Naive thymus-derived CD4-positive, alpha-beta T cell (primary cell): ENCODE measurements at regions of chrX and their contacts with region 1.

Region 1: GRCh38 chrX:54639346-54640102 is 109.5 kb downstream of the GNL3L start:
- DNase-seq: peak; percentile 73 to 95 (median 89)
- ATAC-seq: peak; percentile 93
- H3K4me3 ChIP-seq: peak overlapping the region; percentile 64
- H3K4me3 Mint-ChIP-seq: peak overlapping the region; percentile 74 to 98 (median 94)
- H3K27ac ChIP-seq: peak overlapping the region; percentile 98
- H3K27ac Mint-ChIP-seq: peak overlapping the region; percentile 96 to 100 (median 99)
- H3K4me1 ChIP-seq: peaks cover 4% of the 10 kb centered on the region in 2 donors
- H3K4me1 Mint-ChIP-seq: peaks cover 0 to 16% (median 10%) of the 10 kb centered on the region in 7 donors
- H3K27me3 ChIP-seq: no peaks in the 10 kb centered on the region
- H3K27me3 Mint-ChIP-seq: no peaks in the 10 kb centered on the region

Region 2: GRCh38 chrX:54182864-54183608 is 456.5 kb before region 1 on chrX and contains the start of gene FAM120C:
- CTCF ChIA-PET with region 1: no interaction called
- POLR2A ChIA-PET with region 1: interaction called, 8 read pairs
- intact Hi-C with region 1: loop called (anchors 1 kb)
- DNase-seq: peak; percentile 23 to 70 (median 65)
- ATAC-seq: peak; percentile 79
- H3K4me3 ChIP-seq: peak within 1 kb of the TSS; percentile 62
- H3K4me3 Mint-ChIP-seq: peak within 1 kb of the TSS; percentile 70 to 92 (median 88)
- H3K27ac ChIP-seq: peak within 1 kb of the TSS; percentile 78
- H3K27ac Mint-ChIP-seq: peak within 1 kb of the TSS; percentile 81 to 91 (median 88)
- H3K4me1 ChIP-seq: peaks cover 22 to 27% of the 10 kb centered on the region in 2 donors
- H3K4me1 Mint-ChIP-seq: peaks cover 30 to 42% (median 39%) of the 10 kb centered on the region in 7 donors
- H3K27me3 ChIP-seq: no peaks in the 10 kb centered on the region
- H3K27me3 Mint-ChIP-seq: no peaks in the 10 kb centered on the region
- total RNA-seq, gene FAM120C: 13.5 to 24.7 (median 17.6) TPM

Region 3: DNA sequence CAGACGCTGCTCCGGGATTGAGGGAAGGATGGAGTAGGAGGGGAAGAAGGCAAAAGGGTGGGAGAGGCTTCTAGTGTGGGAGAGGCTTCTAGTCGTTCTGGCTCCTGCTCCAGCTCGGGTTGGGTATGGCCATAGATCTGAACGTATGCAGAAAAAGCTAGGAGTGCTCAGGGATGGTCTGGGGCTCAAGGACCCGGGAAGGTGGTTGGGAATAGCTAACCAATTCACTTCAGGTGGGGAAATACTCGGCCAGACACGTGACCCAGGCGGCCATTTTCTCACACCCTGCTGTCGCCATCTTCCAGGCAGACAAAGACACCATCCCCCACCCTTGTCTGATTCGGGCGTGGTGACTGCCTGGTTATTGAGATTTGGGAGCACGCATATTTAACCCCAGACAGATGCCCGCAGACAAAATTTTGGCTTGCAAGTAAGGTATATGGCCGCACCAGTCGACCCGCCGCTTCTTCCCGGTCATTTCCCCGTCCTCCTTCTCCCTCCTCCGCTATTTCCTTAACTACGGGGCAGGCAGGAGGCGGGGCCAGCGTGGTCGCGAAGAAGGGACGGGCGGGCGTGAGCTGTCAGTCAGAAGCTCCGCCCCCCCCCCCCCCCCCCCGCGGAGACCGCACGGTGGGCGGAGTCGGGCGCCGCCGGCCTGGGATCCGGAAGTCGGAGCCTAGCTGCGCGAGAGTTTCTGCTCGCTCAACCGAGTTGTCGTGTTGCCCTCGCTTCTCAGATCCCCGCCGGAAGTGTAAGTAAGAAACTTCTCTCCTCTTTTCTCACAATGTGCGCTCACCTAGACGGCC is 109.8 kb before region 1 on chrX and contains the start of gene GNL3L:
- CTCF ChIA-PET with region 1: no interaction called
- POLR2A ChIA-PET with region 1: interaction called, 21 read pairs
- intact Hi-C with region 1: loop called (anchors 1 kb)
- DNase-seq: peak; percentile 58 to 84 (median 76)
- ATAC-seq: peak; percentile 93
- H3K4me3 ChIP-seq: peak within 1 kb of the TSS; percentile 82
- H3K4me3 Mint-ChIP-seq: peak within 1 kb of the TSS; percentile 87 to 97 (median 94)
- H3K27ac ChIP-seq: peak within 1 kb of the TSS; percentile 82
- H3K27ac Mint-ChIP-seq: peak within 1 kb of the TSS; percentile 87 to 99 (median 93)
- H3K4me1 ChIP-seq: peaks cover 17 to 30% of the 10 kb centered on the region in 2 donors
- H3K4me1 Mint-ChIP-seq: peaks cover 10 to 46% (median 32%) of the 10 kb centered on the region in 7 donors
- H3K27me3 ChIP-seq: no peaks in the 10 kb centered on the region
- H3K27me3 Mint-ChIP-seq: no peaks in the 10 kb centered on the region
- total RNA-seq, gene GNL3L: 32.8 to 55.4 (median 41.8) TPM

Region 4: GRCh38 chrX:54786962-54787361 is 147.4 kb after region 1 on chrX:
- CTCF ChIA-PET with region 1: no interaction called
- POLR2A ChIA-PET with region 1: no interaction called
- intact Hi-C with region 1: loop called in 1 of 2 experiments (anchors 1 kb)
- DNase-seq: peak in 6 of 9 donors; percentile 12 to 46 (median 34)
- ATAC-seq: peak; percentile 63
- H3K4me3 ChIP-seq: no peak overlapping the region
- H3K4me3 Mint-ChIP-seq: no peak overlapping the region
- H3K27ac ChIP-seq: no peak overlapping the region
- H3K27ac Mint-ChIP-seq: peak overlapping the region in 1 of 9 donors; percentile 24
- H3K4me1 ChIP-seq: no peaks in the 10 kb centered on the region
- H3K4me1 Mint-ChIP-seq: peaks cover 0 to 5% (median 0%) of the 10 kb centered on the region in 7 donors
- H3K27me3 ChIP-seq: no peaks in the 10 kb centered on the region
- H3K27me3 Mint-ChIP-seq: peaks cover 0 to 3% (median 0%) of the 10 kb centered on the region in 5 donors

Region 5: GRCh38 chrX:55057675-55058249 is 418.2 kb after region 1 on chrX:
- CTCF ChIA-PET with region 1: interaction called, 3 read pairs
- POLR2A ChIA-PET with region 1: no interaction called
- intact Hi-C with region 1: loop called in 1 of 2 experiments (anchors 1 kb)
- DNase-seq: peak in 6 of 9 donors; percentile 11 to 46 (median 32)
- ATAC-seq: peak; percentile 84
- H3K4me3 ChIP-seq: peak overlapping the region; percentile 35
- H3K4me3 Mint-ChIP-seq: peak overlapping the region; percentile 12 to 87 (median 76)
- H3K27ac ChIP-seq: no peak overlapping the region
- H3K27ac Mint-ChIP-seq: peak overlapping the region in 7 of 9 donors; percentile 43 to 95 (median 90)
- H3K4me1 ChIP-seq: peaks cover 8 to 16% of the 10 kb centered on the region in 2 donors
- H3K4me1 Mint-ChIP-seq: peaks cover 8 to 29% (median 21%) of the 10 kb centered on the region in 7 donors
- H3K27me3 ChIP-seq: no peaks in the 10 kb centered on the region
- H3K27me3 Mint-ChIP-seq: peaks cover 0 to 5% (median 0%) of the 10 kb centered on the region in 5 donors